ENCODE measurements at regions of chr2 and their contacts with region 1.

Region 1: DNA sequence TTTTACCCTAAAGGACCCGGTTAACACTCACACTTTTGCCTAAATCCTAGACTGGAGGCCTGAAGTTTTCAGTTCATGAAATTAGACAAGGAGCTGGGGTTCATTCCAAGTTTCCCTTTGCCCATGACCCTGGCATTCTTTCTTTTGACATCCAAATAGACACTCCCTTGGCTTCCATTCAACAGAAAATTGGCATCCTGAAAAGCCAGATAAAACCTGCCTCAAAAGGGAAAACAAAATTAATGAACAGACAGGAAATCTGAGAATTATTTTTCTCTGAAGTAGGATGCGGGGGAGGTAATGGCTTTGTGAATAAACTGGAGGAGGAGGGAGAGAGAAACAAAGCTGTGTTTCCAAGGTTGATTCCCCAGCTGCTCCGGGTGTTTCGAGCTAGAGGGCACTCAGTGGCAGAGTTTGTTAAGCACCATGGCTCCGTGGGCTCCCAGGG is 41.0 kb downstream of the SPP2 start:
- DNase-seq: no peak
- H3K4me3 ChIP-seq: no peak overlapping the region
- H3K27ac ChIP-seq: peak overlapping the region in 6 of 8 donors; percentile 11 to 66 (median 48)
- H3K4me1 ChIP-seq: peaks cover 0 to 22% (median 15%) of the 10 kb centered on the region in 6 donors
- H3K27me3 ChIP-seq: no peaks in the 10 kb centered on the region
- CTCF ChIP-seq: no peak
- POLR2A ChIP-seq: no peak

Region 2: DNA sequence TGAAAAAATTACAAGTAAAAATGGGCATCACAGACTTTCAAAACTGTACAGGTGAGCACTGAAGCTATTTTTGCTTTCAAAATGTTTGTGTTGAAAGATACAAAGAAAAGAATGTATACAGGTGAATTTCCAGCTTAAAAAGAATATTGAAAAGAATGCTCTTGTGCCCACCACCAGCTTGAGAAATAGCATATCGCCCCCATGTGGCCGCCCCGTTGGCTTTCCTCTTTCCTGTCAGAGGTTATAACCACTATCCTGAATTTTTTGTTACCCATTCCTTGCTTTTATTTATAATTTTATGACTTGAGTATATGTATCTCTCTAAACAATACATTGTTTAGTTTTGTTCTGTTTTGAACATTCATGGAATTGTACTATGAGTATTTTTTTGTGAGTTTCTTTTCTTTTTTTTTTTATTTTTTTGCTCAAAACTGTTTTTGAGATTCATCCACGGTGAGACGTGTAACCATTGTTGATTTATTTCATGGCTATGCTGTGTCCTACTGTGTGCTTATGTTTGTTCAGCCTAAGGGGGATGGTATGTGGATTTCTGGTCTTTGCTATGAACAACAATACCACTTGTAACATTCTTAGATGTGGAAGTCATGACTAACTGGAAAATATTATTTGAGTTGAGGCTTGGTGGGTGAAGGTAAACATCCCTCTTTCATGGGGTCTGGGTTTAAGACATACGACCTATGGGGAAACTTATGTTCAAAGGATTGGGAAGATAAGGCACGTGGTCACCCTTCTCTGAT is 162.7 kb before region 1 on chr2:
- intact Hi-C with region 1: no loop called
- DNase-seq: no peak
- H3K4me3 ChIP-seq: no peak overlapping the region
- H3K27ac ChIP-seq: no peak overlapping the region
- H3K4me1 ChIP-seq: no peaks in the 10 kb centered on the region
- H3K27me3 ChIP-seq: peaks cover 0 to 78% (median 6%) of the 10 kb centered on the region in 7 donors
- CTCF ChIP-seq: peak in 5 of 11 experiments; percentile 14 to 28 (median 21)
- POLR2A ChIP-seq: no peak

Region 3: GRCh38 chr2:233976690-233977294 is 114.7 kb before region 1 on chr2:
- intact Hi-C with region 1: loop called (anchors 10 kb)
- DNase-seq: no peak
- H3K4me3 ChIP-seq: no peak overlapping the region
- H3K27ac ChIP-seq: no peak overlapping the region
- H3K4me1 ChIP-seq: peaks cover 0 to 12% (median 0%) of the 10 kb centered on the region in 6 donors
- H3K27me3 ChIP-seq: peaks cover 0 to 26% (median 0%) of the 10 kb centered on the region in 7 donors
- CTCF ChIP-seq: peak in 5 of 11 experiments; percentile 30 to 59 (median 36)
- POLR2A ChIP-seq: no peak

Measured in spleen (tissue), 13 donors.